Right cardiac atrium (tissue), 5 donors: ENCODE measurements at regions of chr11 and their contacts with region 1.

Region 1: GRCh38 chr11:85826116-85826855 is 15.3 kb upstream of the SYTL2 start:
- DNase-seq: peak; percentile 20 to 69 (median 68)
- ATAC-seq: peak; percentile 64 to 81
- H3K4me3 ChIP-seq: no peak overlapping the region
- H3K27ac ChIP-seq: no peak overlapping the region
- H3K4me1 ChIP-seq: peaks cover 3% of the 10 kb centered on the region
- H3K27me3 ChIP-seq: no peaks in the 10 kb centered on the region

Region 2: GRCh38 chr11:85595285-85595884 is 230.9 kb before region 1 on chr11:
- intact Hi-C with region 1: loop called in 2 of 4 experiments (anchors 5 to 10 kb)
- DNase-seq: no peak
- ATAC-seq: peak in 1 of 2 donors; percentile 59
- H3K4me3 ChIP-seq: no peak overlapping the region
- H3K27ac ChIP-seq: no peak overlapping the region
- H3K4me1 ChIP-seq: no peaks in the 10 kb centered on the region
- H3K27me3 ChIP-seq: no peaks in the 10 kb centered on the region

Region 3: GRCh38 chr11:85694386-85694980 is 131.8 kb before region 1 on chr11:
- intact Hi-C with region 1: loop called in 3 of 4 experiments (anchors 5 to 10 kb)
- DNase-seq: no peak
- ATAC-seq: no peak
- H3K4me3 ChIP-seq: no peak overlapping the region
- H3K27ac ChIP-seq: no peak overlapping the region
- H3K4me1 ChIP-seq: no peaks in the 10 kb centered on the region
- H3K27me3 ChIP-seq: no peaks in the 10 kb centered on the region

Region 4: DNA sequence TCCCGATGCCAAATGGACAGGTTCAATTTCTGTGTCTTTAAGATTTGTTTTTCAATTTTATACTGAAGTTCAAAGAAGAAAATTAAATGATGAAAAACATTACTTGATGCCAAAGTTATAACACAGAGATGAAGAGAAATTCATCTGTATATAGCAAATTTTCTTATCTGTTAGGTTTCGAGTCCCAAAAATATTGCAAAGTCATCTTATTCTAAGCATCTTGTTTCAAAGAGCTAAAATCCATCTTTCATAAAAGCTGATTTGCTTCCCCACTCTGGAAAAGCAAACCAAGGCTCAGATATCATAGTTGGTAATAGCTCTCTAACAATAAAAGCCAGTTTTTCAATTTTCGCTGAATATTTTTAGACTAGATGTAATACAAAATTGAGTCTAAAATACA is 121.3 kb before region 1 on chr11:
- intact Hi-C with region 1: no loop called
- DNase-seq: no peak
- ATAC-seq: no peak
- H3K4me3 ChIP-seq: no peak overlapping the region
- H3K27ac ChIP-seq: no peak overlapping the region
- H3K4me1 ChIP-seq: no peaks in the 10 kb centered on the region
- H3K27me3 ChIP-seq: no peaks in the 10 kb centered on the region

Region 5: GRCh38 chr11:85752890-85753581 is 73.2 kb before region 1 on chr11:
- intact Hi-C with region 1: no loop called
- DNase-seq: peak in 1 of 3 donors; percentile 59
- ATAC-seq: no peak
- H3K4me3 ChIP-seq: no peak overlapping the region
- H3K27ac ChIP-seq: no peak overlapping the region
- H3K4me1 ChIP-seq: no peaks in the 10 kb centered on the region
- H3K27me3 ChIP-seq: no peaks in the 10 kb centered on the region